Activated CD4-positive, alpha-beta memory T cell treated with anti-CD3 and anti-CD28 coated beads for 36 hours (primary cell): ENCODE measurements at regions of chr10 and their contacts with region 1.

Region 1: DNA sequence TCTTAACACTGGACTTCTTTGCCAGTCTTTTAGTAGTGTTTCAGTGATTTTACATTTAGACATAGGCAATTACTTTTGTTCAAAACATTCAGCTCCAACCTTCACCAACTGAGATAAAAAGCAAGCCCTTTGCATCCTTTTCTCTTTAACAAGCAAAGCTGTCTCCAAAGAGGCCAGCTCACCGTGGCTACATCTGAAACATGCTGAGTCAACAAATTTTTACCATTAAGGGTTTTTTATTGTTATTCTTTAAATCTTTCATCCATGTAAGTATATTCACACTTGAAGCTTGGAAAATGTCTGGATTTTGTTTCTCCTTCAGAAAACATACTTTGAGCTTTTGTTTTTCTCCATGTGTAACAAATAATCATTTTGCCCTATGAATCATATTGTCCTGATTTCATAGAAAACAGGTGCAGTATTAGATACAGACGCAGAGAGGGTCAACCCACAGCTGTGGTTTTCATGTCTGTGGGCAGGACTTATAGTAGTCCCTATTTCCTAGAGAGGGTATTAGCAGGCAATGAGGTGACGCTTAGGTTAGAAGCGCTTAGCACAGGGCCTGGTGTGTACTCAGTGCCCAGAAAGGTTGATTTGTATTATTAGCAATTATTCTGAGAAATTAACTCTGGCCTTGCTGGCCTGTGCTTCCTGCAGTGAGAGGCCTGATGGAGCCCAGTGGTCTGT is 99.5 kb downstream of the MKI67 start:
- DNase-seq: peak; percentile 70
- H3K4me3 Mint-ChIP-seq: no peak overlapping the region
- H3K27ac Mint-ChIP-seq: peak overlapping the region; percentile 87
- H3K4me1 Mint-ChIP-seq: peaks cover 30% of the 10 kb centered on the region
- H3K27me3 Mint-ChIP-seq: peaks cover 3% of the 10 kb centered on the region

Region 2: DNA sequence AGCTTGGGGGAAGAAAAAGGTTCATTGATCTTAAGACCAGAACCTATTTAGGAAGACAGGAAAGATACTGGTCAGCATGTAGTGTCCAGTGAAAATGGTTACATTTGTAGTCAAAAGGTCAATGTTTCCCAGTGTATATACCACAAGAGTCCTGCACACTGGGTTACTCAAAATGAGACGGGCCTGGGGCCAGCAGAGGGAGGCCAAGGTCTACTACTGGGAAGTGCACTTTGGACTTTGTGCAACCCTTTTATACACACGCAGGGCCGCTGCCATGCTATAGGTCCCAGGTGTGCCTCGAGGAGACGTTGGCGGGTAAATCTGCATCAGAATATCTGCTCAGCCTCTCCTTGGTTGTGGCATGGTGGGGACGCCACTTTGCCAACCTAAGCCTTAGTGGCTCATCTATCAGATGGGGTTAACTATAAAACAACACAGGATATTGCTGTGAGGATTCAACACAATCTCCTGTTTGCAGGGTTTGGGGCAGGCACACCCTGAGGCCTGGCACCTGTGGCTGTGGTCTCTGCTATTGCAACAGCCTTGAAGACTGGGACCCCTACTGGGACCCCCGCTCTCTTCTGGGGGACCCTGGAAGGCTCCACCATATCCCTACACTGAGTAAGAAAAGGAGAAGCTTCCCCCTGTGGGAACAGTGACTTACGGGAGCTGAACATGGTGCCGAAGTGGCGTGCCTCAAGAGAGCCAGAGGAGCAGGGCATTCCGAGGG is 153.7 kb before region 1 on chr10:
- CTCF ChIA-PET with region 1: no interaction called
- POLR2A ChIA-PET with region 1: no interaction called
- intact Hi-C with region 1: no loop called
- DNase-seq: peak; percentile 5
- H3K4me3 Mint-ChIP-seq: no peak overlapping the region
- H3K27ac Mint-ChIP-seq: no peak overlapping the region
- H3K4me1 Mint-ChIP-seq: peaks cover 2% of the 10 kb centered on the region
- H3K27me3 Mint-ChIP-seq: peaks cover 17% of the 10 kb centered on the region

Region 3: DNA sequence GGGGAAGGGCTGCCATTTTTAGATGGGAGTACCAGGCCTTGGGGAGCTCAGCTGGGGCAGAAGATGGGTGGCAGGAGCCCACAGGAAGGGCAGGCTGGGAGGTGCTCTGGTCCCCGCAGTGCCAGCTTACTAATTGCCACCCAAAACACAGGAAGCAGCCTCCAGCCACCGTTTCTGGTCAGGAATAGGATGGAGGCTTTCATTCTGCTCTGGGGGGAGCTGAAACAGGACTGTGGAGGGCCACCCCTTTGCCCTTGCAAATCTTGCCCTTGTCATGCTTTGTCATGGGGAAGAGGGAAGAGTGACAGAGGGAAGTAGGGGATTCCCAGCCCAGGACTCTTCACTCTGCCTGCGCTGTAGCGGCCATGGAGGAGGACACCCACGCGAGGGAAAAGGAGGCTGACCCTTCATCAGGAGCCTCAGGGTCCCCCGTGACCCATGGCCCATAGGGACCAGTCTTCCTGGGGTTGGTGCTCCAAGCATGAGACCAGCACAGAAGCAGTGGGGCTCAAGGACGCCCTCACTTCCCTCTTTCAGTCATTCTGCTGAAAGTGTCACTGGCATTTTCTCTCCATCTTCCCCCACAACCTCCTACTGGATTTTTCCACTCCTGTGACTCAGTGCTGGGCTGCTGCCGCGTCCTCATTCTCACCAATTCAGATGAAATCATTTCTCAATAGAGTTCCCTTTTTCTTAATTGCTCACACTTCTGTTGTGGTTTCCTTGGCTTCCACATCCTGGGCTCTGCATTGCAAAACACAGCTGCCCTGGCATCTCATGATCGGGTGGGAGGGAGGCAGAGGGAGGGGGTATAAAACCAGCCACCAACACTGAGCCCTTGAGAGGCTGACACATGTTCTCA is 37.6 kb after region 1 on chr10:
- CTCF ChIA-PET with region 1: interaction called, 21 read pairs
- POLR2A ChIA-PET with region 1: interaction called, 6 read pairs
- intact Hi-C with region 1: loop called (anchors 2 kb)
- DNase-seq: peak; percentile 91
- H3K4me3 Mint-ChIP-seq: peak overlapping the region; percentile 59
- H3K27ac Mint-ChIP-seq: peak overlapping the region; percentile 96
- H3K4me1 Mint-ChIP-seq: peaks cover 58% of the 10 kb centered on the region
- H3K27me3 Mint-ChIP-seq: no peaks in the 10 kb centered on the region

Region 4: DNA sequence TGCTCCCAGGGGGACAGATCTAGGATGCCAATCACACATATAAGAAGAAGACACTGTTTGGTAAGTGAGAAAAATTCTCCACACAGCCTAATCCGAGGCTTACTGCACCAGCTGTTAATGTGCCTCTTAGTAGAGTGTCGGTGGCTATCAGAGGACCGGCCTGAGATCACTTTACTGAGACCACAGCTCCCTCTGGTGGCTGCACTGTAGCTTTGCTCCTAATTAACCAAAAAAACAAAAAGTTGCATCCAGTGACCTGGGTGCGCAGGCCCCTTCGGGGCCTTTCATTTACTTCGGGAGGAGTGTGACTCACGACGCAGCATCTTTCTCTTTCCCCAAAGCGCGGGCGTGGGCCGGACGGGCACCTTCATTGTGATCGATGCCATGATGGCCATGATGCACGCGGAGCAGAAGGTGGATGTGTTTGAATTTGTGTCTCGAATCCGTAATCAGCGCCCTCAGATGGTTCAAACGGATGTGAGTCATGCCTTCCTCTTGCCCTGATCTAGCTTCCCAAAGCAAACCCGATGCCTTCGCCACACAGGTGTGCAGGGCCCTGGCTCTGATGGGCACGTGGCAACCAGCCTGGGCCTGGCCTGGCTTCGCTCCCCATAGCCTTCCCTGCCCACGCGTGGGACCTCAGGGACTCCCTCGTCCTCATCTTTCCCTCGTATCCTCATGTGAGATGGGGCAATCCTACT is 42.7 kb after region 1 on chr10:
- CTCF ChIA-PET with region 1: interaction called, 21 read pairs
- POLR2A ChIA-PET with region 1: interaction called, 6 read pairs
- intact Hi-C with region 1: loop called (anchors 2 kb)
- DNase-seq: peak; percentile 86
- H3K4me3 Mint-ChIP-seq: no peak overlapping the region
- H3K27ac Mint-ChIP-seq: no peak overlapping the region
- H3K4me1 Mint-ChIP-seq: peaks cover 35% of the 10 kb centered on the region
- H3K27me3 Mint-ChIP-seq: no peaks in the 10 kb centered on the region